Ascending aorta (tissue), 2 donors: ENCODE measurements at regions of chr5 and their contacts with region 1.

Region 1: DNA sequence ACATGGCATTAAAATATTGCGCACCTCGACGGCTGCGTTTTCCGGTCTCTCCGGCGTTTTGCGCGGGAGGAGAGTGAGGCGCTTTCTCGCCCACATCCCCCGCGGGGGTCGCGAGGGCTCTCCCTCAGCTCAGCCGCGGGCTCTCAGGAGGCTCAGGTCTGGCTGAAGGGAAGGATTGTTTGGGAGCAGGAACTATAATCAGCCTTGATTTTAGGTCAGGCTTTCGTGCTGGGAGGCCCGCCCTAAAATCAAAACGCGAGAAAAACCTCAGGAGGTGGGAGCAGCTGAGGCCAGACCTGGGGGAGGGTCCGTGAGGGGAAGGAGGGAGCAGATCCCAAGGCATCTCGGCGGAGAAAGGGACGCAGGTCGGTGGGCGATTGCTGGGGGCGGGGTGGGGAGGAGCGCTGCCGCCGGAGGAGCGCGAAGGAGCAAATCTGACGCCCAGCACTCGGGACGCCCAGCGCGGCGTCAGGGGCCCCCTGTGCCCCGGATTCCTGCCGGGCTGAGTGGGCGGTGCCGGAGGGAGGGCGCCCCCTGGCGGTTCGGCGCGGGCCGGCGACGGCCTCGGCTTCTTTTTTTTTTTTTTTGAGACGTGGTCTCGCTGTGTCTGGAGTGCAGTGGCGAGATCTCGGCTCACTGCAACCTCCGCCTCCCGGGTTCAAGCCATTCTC is 18.7 kb upstream of the RNF130 start:
- DNase-seq: peak in 1 of 2 donors; percentile 79
- H3K4me3 ChIP-seq: peak overlapping the region; percentile 56 to 69
- H3K27ac ChIP-seq: peak overlapping the region; percentile 39 to 59
- H3K4me1 ChIP-seq: no peaks in the 10 kb centered on the region
- H3K27me3 ChIP-seq: no peaks in the 10 kb centered on the region
- CTCF ChIP-seq: peak; percentile 75 to 83 (median 80)

Region 2: GRCh38 chr5:179986328-179986727 is 103.9 kb before region 1 on chr5:
- intact Hi-C with region 1: loop called (anchors 1 kb)
- DNase-seq: no peak
- H3K4me3 ChIP-seq: no peak overlapping the region
- H3K27ac ChIP-seq: no peak overlapping the region
- H3K4me1 ChIP-seq: no peaks in the 10 kb centered on the region
- H3K27me3 ChIP-seq: no peaks in the 10 kb centered on the region
- CTCF ChIP-seq: no peak

Region 3: GRCh38 chr5:180071531-180072255 is 18.5 kb before region 1 on chr5 and contains the start of gene RNF130:
- intact Hi-C with region 1: loop called (anchors 1 kb)
- DNase-seq: peak; percentile 72 to 95
- H3K4me3 ChIP-seq: peak within 1 kb of the TSS; percentile 74 to 94
- H3K27ac ChIP-seq: peak within 1 kb of the TSS; percentile 94 to 98
- H3K4me1 ChIP-seq: peaks cover 0 to 10% of the 10 kb centered on the region in 2 donors
- H3K27me3 ChIP-seq: no peaks in the 10 kb centered on the region
- CTCF ChIP-seq: no peak
- total RNA-seq, gene RNF130: 86.7 TPM

Region 4: GRCh38 chr5:180155365-180155926 is 65.2 kb after region 1 on chr5:
- intact Hi-C with region 1: no loop called
- DNase-seq: peak in 1 of 2 donors; percentile 43
- H3K4me3 ChIP-seq: no peak overlapping the region
- H3K27ac ChIP-seq: no peak overlapping the region
- H3K4me1 ChIP-seq: no peaks in the 10 kb centered on the region
- H3K27me3 ChIP-seq: no peaks in the 10 kb centered on the region
- CTCF ChIP-seq: no peak

Region 5: GRCh38 chr5:180723936-180724335 is 633.7 kb after region 1 on chr5:
- intact Hi-C with region 1: no loop called
- DNase-seq: no peak
- H3K4me3 ChIP-seq: no peak overlapping the region
- H3K27ac ChIP-seq: no peak overlapping the region
- H3K4me1 ChIP-seq: no peaks in the 10 kb centered on the region
- H3K27me3 ChIP-seq: no peaks in the 10 kb centered on the region
- CTCF ChIP-seq: no peak